HEK293T (cell line): ENCODE measurements at regions of chr1 and their contacts with region 1.

Region 1: GRCh38 chr1:205591522-205592351 is 40.1 kb downstream of the ELK4 start:
- DNase-seq: peak; percentile 95

Region 2: GRCh38 chr1:205631727-205632373 is 40.1 kb after region 1 on chr1 and contains the start of gene ELK4:
- CTCF ChIA-PET with region 1: interaction called, 14 read pairs
- POLR2A ChIA-PET with region 1: interaction called, 35 read pairs
- DNase-seq: peak; percentile 99

Region 3: GRCh38 chr1:205650241-205650640 is 58.5 kb after region 1 on chr1:
- CTCF ChIA-PET with region 1: interaction called, 146 read pairs
- POLR2A ChIA-PET with region 1: interaction called, 3 read pairs
- DNase-seq: no peak

Region 4: GRCh38 chr1:205711104-205712020 is 119.6 kb after region 1 on chr1:
- CTCF ChIA-PET with region 1: interaction called, 11 read pairs
- POLR2A ChIA-PET with region 1: interaction called, 3 read pairs
- DNase-seq: peak; percentile 75